Activated naive CD4-positive, alpha-beta T cell treated with anti-CD3 and anti-CD28 coated beads for 36 hours (primary cell): ENCODE measurements at regions of chr7 and their contacts with region 1.

Region 1: DNA sequence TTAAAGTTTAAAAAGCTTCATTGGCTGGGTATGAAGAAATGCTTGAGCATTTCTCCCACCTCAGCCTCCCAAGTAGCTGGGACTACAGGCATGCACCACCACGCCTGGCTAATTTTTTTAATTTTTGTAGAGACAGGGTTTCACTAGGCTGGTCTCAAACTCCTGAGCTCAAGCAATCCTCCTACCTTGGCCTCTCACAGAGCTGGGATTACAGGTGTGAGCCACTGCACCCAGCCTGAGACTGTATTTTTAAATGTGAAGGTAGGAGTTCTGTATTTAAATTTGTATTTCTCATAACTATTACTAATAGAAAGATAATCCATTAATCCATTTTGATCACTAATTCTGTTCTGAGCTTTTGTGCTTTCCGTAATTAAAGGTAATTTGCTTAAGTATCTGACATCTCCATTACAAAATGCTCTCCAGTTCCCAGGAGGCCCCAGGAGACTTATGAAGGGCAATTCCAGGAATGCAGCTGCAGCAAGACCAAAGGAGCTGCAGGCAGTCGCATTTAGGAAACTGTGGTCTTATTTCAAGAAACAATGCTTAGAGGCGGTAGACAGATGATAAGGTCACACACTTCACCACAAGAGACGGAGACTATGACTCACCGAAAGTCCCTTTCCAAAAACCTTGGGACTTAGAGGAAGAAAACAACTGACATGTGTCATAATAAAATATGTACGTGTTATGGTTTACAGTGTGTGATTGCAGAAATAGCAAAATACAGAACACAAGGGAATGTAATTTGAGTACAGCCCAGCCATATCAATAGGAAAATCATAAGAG is 23.3 kb downstream of the YAE1 start:
- DNase-seq: peak; percentile 92
- H3K4me3 Mint-ChIP-seq: no peak overlapping the region
- H3K27ac Mint-ChIP-seq: peak overlapping the region; percentile 52
- H3K4me1 Mint-ChIP-seq: peaks cover 39% of the 10 kb centered on the region
- H3K27me3 Mint-ChIP-seq: no peaks in the 10 kb centered on the region

Region 2: DNA sequence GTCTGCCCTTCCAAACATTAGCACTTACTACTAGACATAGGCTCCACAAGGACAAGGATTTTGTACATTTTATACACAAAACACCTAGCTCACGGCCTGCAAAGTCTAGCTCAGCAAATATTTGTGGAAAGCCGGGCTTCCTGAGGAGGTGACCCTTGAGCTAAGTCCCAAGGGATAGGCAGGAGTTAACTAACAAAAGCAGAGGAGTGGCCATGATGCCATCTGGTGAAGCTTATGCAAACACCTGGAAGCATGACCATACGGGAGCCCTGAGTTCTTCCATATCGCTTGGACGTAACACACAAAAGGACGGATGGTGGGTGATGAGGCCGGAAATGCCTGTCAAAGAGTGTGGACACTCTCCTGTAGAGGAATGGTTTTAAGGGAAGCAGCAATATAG is 49.2 kb before region 1 on chr7:
- CTCF ChIA-PET with region 1: no interaction called
- intact Hi-C with region 1: no loop called
- DNase-seq: no peak
- H3K4me3 Mint-ChIP-seq: no peak overlapping the region
- H3K27ac Mint-ChIP-seq: no peak overlapping the region
- H3K4me1 Mint-ChIP-seq: no peaks in the 10 kb centered on the region
- H3K27me3 Mint-ChIP-seq: peaks cover 3% of the 10 kb centered on the region

Region 3: DNA sequence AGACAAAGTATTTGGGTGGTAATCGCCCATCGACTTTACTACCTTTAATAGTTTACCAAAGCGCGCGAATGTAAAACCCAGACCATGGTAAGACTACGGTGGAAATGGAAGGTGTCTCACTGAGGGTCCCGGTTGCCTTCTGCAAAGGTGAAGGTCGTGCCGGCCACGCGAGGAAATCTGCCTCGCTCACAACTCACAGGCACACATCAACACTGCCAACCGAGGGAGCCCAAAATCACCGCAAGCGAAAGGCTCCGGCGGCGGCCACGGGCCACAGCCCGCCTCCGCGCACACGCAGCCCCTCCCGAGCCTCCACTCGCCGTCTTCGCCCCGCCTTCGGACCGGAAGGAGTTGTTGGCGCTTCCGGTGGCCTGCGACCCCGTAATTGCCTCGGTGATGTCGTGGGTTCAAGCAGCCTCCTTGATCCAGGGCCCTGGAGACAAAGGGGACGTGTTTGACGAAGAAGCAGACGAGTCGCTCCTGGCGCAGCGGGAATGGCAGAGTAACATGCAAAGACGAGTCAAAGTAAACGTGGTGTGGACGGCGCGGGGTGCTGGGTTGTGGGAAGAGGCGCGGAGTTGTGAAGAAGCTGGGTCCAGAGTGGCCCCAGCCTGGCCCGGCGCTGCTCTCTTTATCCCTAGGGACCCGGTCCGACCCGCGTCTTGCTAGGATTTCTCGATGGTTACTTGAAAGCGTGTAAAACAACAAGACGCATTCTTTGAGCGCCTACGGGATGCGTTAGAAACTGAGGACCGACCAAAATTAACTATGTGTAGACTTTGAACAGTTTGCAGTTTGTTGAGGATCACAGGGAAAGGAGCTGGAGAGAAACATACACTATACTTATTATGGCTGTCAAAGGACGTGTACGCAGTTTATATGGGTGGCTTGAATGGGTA is 23.2 kb before region 1 on chr7 and contains the start of gene YAE1:
- CTCF ChIA-PET with region 1: no interaction called
- intact Hi-C with region 1: loop called (anchors 1 kb)
- DNase-seq: peak; percentile 86
- H3K4me3 Mint-ChIP-seq: peak within 1 kb of the TSS; percentile 97
- H3K27ac Mint-ChIP-seq: peak within 1 kb of the TSS; percentile 95
- H3K4me1 Mint-ChIP-seq: peaks cover 18% of the 10 kb centered on the region
- H3K27me3 Mint-ChIP-seq: no peaks in the 10 kb centered on the region
- total RNA-seq, gene YAE1: 4.6 to 5.5 TPM

Region 4: DNA sequence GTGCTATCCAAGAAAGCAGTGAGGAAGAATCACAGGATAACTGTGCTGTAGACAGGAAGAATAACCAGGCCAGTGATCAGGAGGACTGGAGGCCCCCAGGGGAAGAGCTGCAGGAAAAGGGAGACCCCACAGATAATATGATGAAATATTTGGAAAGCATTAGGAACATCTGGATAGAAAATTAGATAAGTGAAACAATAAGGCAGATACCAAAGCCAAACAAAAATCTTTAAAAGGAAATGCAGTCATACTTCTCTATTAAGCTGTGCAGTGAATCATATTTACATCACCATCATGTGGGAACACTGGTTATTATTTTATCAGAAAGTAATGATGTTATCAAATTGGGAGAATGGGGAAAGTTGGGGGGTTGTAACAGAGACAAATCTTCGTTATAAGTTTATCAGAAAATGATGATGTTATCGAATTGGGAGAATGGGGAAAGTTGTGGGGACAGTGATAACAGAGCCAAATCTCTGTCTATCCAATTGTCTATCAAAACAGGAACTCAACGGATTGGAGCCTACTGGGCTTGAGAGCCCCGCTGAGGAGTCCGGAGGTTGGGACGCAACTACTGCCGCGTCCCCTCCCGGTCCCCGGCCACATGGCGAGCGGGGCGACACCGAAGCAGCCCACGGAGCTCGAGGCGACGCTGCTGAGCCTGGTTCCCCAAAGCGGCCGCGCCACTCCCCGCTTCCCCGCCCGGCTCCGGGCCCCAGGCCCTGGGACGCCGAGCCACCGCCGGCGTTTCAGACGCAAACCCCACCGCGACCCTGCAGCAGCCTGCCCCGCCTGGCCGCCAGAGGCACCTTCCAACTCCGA is 19.8 kb after region 1 on chr7:
- CTCF ChIA-PET with region 1: interaction called, 5 read pairs
- intact Hi-C with region 1: loop called (anchors 1 kb)
- DNase-seq: peak; percentile 20
- H3K4me3 Mint-ChIP-seq: peak overlapping the region; percentile 55
- H3K27ac Mint-ChIP-seq: peak overlapping the region; percentile 39
- H3K4me1 Mint-ChIP-seq: peaks cover 48% of the 10 kb centered on the region
- H3K27me3 Mint-ChIP-seq: peaks cover 3% of the 10 kb centered on the region

Region 5: GRCh38 chr7:39633563-39634477 is 44.3 kb after region 1 on chr7:
- CTCF ChIA-PET with region 1: no interaction called
- intact Hi-C with region 1: loop called (anchors 1 kb)
- DNase-seq: peak; percentile 26
- H3K4me3 Mint-ChIP-seq: no peak overlapping the region
- H3K27ac Mint-ChIP-seq: peak overlapping the region; percentile 75
- H3K4me1 Mint-ChIP-seq: peaks cover 81% of the 10 kb centered on the region
- H3K27me3 Mint-ChIP-seq: no peaks in the 10 kb centered on the region

Region 6: DNA sequence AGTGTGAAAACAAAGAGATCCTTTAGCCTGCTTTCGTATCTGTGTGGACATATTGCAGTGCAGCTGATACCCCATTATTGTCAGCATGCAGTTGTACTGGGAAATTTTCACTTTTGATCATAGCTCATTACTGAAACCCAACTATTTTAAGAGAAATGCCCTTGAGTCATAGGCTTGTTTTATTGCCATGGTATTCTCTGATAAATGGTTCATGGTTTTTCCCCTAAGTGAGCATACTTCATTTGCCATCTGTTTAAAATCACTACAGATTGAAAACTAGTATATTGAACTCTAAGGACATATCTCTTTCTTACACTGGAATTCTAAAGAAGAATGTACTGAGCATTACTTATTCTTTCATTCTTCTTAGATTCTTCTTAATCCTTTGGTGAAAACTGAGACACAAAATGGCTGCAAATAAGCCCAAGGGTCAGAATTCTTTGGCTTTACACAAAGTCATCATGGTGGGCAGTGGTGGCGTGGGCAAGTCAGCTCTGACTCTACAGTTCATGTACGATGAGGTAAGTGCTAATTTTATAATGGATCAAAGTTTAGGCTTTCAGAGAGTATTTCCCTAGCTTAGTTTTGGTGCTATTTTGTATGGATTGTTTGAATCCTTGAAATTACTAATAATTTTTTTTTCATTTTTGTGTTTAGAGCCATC is 96.9 kb after region 1 on chr7:
- CTCF ChIA-PET with region 1: no interaction called
- intact Hi-C with region 1: loop called (anchors 1 kb)
- DNase-seq: no peak
- H3K4me3 Mint-ChIP-seq: no peak overlapping the region
- H3K27ac Mint-ChIP-seq: peak overlapping the region; percentile 69
- H3K4me1 Mint-ChIP-seq: peaks cover 65% of the 10 kb centered on the region
- H3K27me3 Mint-ChIP-seq: no peaks in the 10 kb centered on the region

Region 7: DNA sequence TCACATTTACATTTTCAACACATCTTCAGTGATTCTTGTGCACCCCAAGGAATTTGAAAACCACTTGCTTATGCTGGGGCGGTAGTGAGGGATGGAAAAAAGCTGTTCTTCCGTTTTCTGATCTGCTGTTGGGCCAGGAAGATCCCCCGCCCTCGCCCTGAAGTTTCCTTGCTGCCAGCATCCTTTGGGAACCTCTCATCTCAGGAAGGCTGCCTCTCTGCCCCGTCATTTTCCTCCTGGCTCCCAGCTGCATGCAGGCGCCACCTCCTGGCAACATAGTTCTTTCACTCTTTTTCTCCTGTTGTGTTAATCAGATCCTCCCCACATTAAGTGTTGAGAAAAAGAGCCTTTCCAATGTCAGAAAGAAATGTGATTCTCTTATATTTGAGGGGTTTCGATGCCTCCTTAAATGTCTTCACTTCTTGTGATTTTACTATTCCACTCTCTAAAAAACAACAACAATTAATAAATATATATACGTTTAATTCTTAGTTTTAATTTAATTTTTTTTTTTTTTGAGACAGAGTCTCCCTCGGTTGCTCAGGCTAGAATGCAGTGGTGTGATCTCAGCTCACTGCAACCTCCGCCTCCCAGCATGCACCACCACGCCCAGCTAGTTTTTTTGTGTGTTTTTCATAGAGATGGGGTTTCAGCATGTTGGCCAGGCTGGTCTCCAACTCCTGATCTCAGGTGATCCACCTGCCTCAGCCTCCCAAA is 156.7 kb after region 1 on chr7:
- CTCF ChIA-PET with region 1: interaction called, 20 read pairs
- intact Hi-C with region 1: no loop called
- DNase-seq: peak; percentile 76
- H3K4me3 Mint-ChIP-seq: no peak overlapping the region
- H3K27ac Mint-ChIP-seq: no peak overlapping the region
- H3K4me1 Mint-ChIP-seq: peaks cover 18% of the 10 kb centered on the region
- H3K27me3 Mint-ChIP-seq: no peaks in the 10 kb centered on the region

Region 8: GRCh38 chr7:39825401-39825980 is 236.0 kb after region 1 on chr7:
- CTCF ChIA-PET with region 1: no interaction called
- intact Hi-C with region 1: no loop called
- DNase-seq: no peak
- H3K4me3 Mint-ChIP-seq: no peak overlapping the region
- H3K27ac Mint-ChIP-seq: no peak overlapping the region
- H3K4me1 Mint-ChIP-seq: peaks cover 2% of the 10 kb centered on the region
- H3K27me3 Mint-ChIP-seq: peaks cover 41% of the 10 kb centered on the region